ENCODE measurements at regions of chr4 and their contacts with region 1.

Region 1: GRCh38 chr4:165131247-165131832 is 18.7 kb upstream of the TMEM192 start:
- DNase-seq: peak; percentile 54 to 84 (median 76)
- ATAC-seq: peak; percentile 78
- H3K4me3 ChIP-seq: no peak overlapping the region
- H3K4me3 Mint-ChIP-seq: no peak overlapping the region
- H3K27ac ChIP-seq: no peak overlapping the region
- H3K27ac Mint-ChIP-seq: no peak overlapping the region
- H3K4me1 ChIP-seq: no peaks in the 10 kb centered on the region
- H3K4me1 Mint-ChIP-seq: no peaks in the 10 kb centered on the region
- H3K27me3 ChIP-seq: peaks cover 0 to 2% of the 10 kb centered on the region in 2 experiments
- H3K27me3 Mint-ChIP-seq: peaks cover 36% of the 10 kb centered on the region
- CTCF ChIP-seq: peak; percentile 93

Region 2: GRCh38 chr4:164813554-164813953 is 317.8 kb before region 1 on chr4:
- CTCF ChIA-PET with region 1: no interaction called
- POLR2A ChIA-PET with region 1: no interaction called
- intact Hi-C with region 1: no loop called
- DNase-seq: no peak
- ATAC-seq: no peak
- H3K4me3 ChIP-seq: no peak overlapping the region
- H3K4me3 Mint-ChIP-seq: no peak overlapping the region
- H3K27ac ChIP-seq: no peak overlapping the region
- H3K27ac Mint-ChIP-seq: no peak overlapping the region
- H3K4me1 ChIP-seq: no peaks in the 10 kb centered on the region
- H3K4me1 Mint-ChIP-seq: no peaks in the 10 kb centered on the region
- H3K27me3 ChIP-seq: no peaks in the 10 kb centered on the region
- H3K27me3 Mint-ChIP-seq: no peaks in the 10 kb centered on the region
- CTCF ChIP-seq: no peak

Region 3: GRCh38 chr4:165112368-165113139 is 18.8 kb before region 1 on chr4 and contains the start of gene TMEM192:
- CTCF ChIA-PET with region 1: interaction called, 11 read pairs
- POLR2A ChIA-PET with region 1: interaction called, 4 read pairs
- intact Hi-C with region 1: no loop called
- DNase-seq: peak; percentile 84 to 93 (median 90)
- ATAC-seq: peak; percentile 97
- H3K4me3 ChIP-seq: peak within 1 kb of the TSS; percentile 88
- H3K4me3 Mint-ChIP-seq: peak within 1 kb of the TSS; percentile 93
- H3K27ac ChIP-seq: peak within 1 kb of the TSS; percentile 50 to 52
- H3K27ac Mint-ChIP-seq: peak within 1 kb of the TSS; percentile 84
- H3K4me1 ChIP-seq: peaks cover 12% of the 10 kb centered on the region
- H3K4me1 Mint-ChIP-seq: peaks cover 27% of the 10 kb centered on the region
- H3K27me3 ChIP-seq: no peaks in the 10 kb centered on the region
- H3K27me3 Mint-ChIP-seq: no peaks in the 10 kb centered on the region
- CTCF ChIP-seq: no peak
- total RNA-seq, gene TMEM192: 4.6 to 4.7 TPM

Region 4: DNA sequence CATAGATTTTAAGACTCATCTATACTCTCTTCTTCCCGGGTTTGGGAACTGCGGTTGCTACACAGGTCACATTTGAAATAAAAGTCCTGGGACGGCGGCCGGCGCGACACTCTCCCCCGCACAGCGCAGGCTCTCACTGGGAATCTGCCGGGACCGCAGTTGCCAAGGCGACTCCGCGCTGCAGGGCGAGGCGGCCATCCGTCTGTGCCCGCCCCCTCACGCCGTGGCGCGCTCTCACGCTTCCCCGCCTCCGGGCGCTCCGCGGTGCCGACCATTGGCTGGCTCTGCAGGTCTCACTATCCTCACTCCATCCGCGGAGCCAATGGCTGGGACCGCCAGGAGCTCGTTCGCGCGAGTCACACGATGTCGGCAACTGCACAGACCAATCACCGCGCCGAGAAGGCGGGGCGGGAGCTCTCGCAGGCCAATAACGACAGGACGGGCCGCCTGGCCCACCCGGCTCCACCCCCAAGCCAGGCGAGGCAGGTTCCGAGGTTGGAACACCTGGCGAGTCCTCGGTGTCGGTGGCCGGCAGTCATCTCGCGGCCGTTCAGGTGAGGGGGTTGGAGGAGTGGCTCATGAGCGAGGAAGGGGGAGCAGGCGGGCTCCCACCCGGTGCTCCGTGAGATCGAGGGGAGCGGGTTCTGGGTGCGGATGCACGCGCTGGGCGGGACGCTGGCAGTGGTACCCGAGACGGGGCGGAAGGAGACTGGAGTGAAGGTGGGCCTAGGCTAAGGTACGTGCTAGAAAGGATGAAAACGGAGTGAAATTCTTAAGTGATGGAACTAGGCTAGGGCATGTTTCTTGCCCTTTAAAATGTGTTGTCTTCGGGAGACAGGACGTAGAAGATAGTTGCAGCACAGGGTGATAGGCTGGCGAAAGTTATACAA is 196.1 kb after region 1 on chr4 and contains the start of gene MSMO1:
- CTCF ChIA-PET with region 1: no interaction called
- POLR2A ChIA-PET with region 1: interaction called, 7 read pairs
- intact Hi-C with region 1: loop called in 1 of 2 experiments (anchors 5 kb)
- DNase-seq: peak; percentile 94 to 99 (median 97)
- ATAC-seq: peak; percentile 95
- H3K4me3 ChIP-seq: peak within 1 kb of the TSS; percentile 95
- H3K4me3 Mint-ChIP-seq: no peak within 1 kb of the TSS
- H3K27ac ChIP-seq: peak within 1 kb of the TSS; percentile 70 to 79
- H3K27ac Mint-ChIP-seq: no peak within 1 kb of the TSS
- H3K4me1 ChIP-seq: peaks cover 33% of the 10 kb centered on the region
- H3K4me1 Mint-ChIP-seq: peaks cover 23% of the 10 kb centered on the region
- H3K27me3 ChIP-seq: no peaks in the 10 kb centered on the region
- H3K27me3 Mint-ChIP-seq: no peaks in the 10 kb centered on the region
- CTCF ChIP-seq: no peak
- total RNA-seq, gene MSMO1: 13.3 to 15.1 TPM

Region 5: GRCh38 chr4:165464813-165465381 is 333.6 kb after region 1 on chr4:
- CTCF ChIA-PET with region 1: interaction called, 13 read pairs
- POLR2A ChIA-PET with region 1: no interaction called
- intact Hi-C with region 1: loop called (anchors 1 kb)
- DNase-seq: peak in 5 of 14 experiments; percentile 1 to 72 (median 46)
- ATAC-seq: peak; percentile 64
- H3K4me3 ChIP-seq: no peak overlapping the region
- H3K4me3 Mint-ChIP-seq: no peak overlapping the region
- H3K27ac ChIP-seq: no peak overlapping the region
- H3K27ac Mint-ChIP-seq: no peak overlapping the region
- H3K4me1 ChIP-seq: no peaks in the 10 kb centered on the region
- H3K4me1 Mint-ChIP-seq: no peaks in the 10 kb centered on the region
- H3K27me3 ChIP-seq: no peaks in the 10 kb centered on the region
- H3K27me3 Mint-ChIP-seq: peaks cover 18% of the 10 kb centered on the region
- CTCF ChIP-seq: peak; percentile 85

Region 6: DNA sequence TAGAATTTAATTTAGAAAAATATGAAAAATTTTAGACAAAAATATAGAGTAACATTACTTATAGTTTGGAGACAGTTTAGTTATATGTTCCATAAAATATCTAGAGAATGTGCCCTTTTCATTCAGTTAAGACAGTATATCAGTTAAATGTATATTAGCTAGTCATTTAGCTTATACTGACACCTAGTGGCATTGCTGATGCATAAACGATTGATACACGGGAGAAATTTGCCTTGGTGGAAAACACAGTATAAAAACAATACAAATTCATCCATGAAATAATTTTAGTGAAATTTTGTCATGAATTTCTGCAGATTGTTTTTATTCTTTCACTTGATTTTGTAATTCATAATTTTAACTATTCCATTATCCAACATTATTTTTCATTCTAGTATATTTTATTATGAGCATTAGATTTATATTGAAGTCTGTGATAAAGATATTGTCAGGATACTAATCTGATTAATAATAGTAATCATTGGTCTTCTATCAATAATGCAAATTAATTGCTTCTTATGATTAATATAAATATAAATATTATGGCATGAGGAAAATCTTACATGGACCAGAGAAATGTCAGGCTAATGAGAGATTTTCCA is 960.7 kb after region 1 on chr4:
- CTCF ChIA-PET with region 1: no interaction called
- POLR2A ChIA-PET with region 1: no interaction called
- intact Hi-C with region 1: loop called (anchors 5 to 10 kb)
- DNase-seq: peak in 3 of 14 experiments; percentile 29 to 38 (median 32)
- ATAC-seq: no peak
- H3K4me3 ChIP-seq: no peak overlapping the region
- H3K4me3 Mint-ChIP-seq: no peak overlapping the region
- H3K27ac ChIP-seq: no peak overlapping the region
- H3K27ac Mint-ChIP-seq: no peak overlapping the region
- H3K4me1 ChIP-seq: no peaks in the 10 kb centered on the region
- H3K4me1 Mint-ChIP-seq: no peaks in the 10 kb centered on the region
- H3K27me3 ChIP-seq: no peaks in the 10 kb centered on the region
- H3K27me3 Mint-ChIP-seq: no peaks in the 10 kb centered on the region
- CTCF ChIP-seq: peak; percentile 59